Activated T-helper 1 cell treated with anti-CD3 and anti-CD28 coated beads, Interleukin-12 subunit alpha, Interleukin-12 subunit beta, Interleukin-2, Interleukin-4 antibody, amounts not matched to agents 30 ng/mL and 10 ng/mL and 1 ng/mL, durations not matched to agents 14 hours and 24 hours and 36 hours (primary cell): ENCODE measurements at regions of chr1 and their contacts with region 1.

Region 1: DNA sequence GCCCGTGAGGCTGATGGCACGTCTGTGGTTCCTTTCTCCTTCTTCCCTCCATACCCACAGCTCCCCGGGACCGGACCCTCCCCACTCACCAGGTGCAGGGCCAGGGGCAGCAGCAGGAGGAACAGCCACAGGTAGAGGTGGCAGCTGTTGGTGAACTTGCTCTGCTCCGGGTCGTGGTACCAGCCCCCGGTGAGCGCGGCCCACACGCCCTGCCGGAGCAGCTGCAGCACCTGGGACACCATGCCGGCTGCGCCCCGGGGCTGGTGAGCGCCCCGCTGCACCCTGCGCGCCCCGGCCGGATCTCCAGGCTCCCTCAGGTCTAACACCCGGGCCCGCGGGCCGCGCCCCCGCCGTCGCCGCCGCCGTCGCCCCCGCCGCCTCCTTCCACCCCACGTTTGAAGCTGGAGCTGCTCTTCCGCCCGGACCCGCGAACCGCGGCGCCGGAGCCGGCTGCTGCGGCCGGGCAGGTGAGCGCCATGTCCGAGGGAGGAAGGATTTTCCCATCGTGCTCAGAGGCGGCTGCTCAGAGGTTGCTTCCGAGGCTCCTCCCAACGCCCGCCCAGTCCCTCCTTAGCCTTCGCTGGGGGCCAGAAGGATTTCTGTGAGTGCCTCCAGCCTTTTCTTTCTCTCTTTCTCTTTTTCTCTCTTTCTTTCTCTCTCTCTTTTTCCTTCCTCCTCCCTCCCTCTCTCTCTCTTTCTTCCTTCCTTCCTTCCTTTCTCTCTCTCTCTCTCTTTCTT is at the start of gene PCNX2:
- DNase-seq: peak; percentile 54
- H3K4me3 Mint-ChIP-seq: peak within 1 kb of the TSS; percentile 94
- H3K27ac Mint-ChIP-seq: peak within 1 kb of the TSS; percentile 86
- H3K4me1 Mint-ChIP-seq: peaks cover 37% of the 10 kb centered on the region
- H3K27me3 Mint-ChIP-seq: no peaks in the 10 kb centered on the region
- total RNA-seq, gene PCNX2: 33.1 and 33.7 TPM in 2 replicates

Region 2: GRCh38 chr1:233269656-233270055 is 25.8 kb before region 1 on chr1:
- intact Hi-C with region 1: loop called (anchors 2 kb)
- DNase-seq: no peak
- H3K4me3 Mint-ChIP-seq: no peak overlapping the region
- H3K27ac Mint-ChIP-seq: no peak overlapping the region
- H3K4me1 Mint-ChIP-seq: peaks cover 34% of the 10 kb centered on the region
- H3K27me3 Mint-ChIP-seq: no peaks in the 10 kb centered on the region

Region 3: GRCh38 chr1:233315718-233316301 is 20.4 kb after region 1 on chr1:
- intact Hi-C with region 1: no loop called
- DNase-seq: no peak
- H3K4me3 Mint-ChIP-seq: no peak overlapping the region
- H3K27ac Mint-ChIP-seq: no peak overlapping the region
- H3K4me1 Mint-ChIP-seq: no peaks in the 10 kb centered on the region
- H3K27me3 Mint-ChIP-seq: peaks cover 48% of the 10 kb centered on the region